Posterior vena cava (tissue), 2 donors: ENCODE measurements at regions of chr9 and their contacts with region 1.

Region 1: DNA sequence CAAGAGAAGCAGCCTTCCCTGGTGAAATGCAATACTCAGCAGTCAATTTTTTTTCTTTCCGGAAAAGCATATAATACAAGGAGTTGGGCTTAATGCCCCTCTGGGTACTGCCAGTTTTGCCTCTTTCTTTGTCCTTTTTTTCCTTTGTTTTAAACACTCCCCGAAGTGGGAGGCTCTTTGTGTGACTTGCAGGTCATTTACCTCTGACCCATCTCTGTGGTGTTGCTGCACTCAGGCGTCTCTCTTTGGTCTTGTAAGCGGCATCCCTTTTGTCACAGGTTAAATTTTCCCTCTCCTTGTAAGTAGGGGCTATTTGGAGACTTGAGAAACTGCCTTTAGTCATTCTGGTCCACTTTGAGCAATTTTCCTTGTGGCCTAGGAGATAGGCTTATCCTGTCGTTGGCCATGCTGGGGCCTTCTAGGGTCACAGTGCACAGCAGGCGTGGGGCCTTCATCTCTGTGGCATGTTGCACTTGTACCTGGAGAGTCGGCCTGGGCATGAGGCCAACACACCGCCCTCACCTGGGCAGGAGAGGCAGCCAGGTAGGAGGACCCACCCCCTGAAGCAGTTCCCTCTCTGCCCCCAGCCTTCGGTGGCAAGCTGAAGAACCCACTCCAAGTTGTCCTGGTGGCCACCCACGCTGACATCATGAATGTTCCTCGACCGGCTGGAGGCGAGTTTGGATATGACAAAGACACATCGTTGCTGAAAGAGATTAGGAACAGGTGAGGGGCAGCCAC is 27.7 kb upstream of the CTSL start:
- DNase-seq: no peak

Region 2: GRCh38 chr9:87099407-87099806 is 598.8 kb before region 1 on chr9:
- intact Hi-C with region 1: no loop called
- DNase-seq: no peak

Region 3: GRCh38 chr9:88689509-88690298 is 991.5 kb after region 1 on chr9:
- intact Hi-C with region 1: loop called in 1 of 2 experiments (anchors 5 kb)
- DNase-seq: no peak